Sciatic nerve (tissue), 2 donors: ENCODE measurements at regions of chr2 and their contacts with region 1.

Region 1: GRCh38 chr2:16613539-16614011 is 52.1 kb downstream of the CYRIA start:
- DNase-seq: no peak
- ATAC-seq: peak; percentile 9

Region 2: GRCh38 chr2:16525265-16525887 is 88.2 kb before region 1 on chr2:
- intact Hi-C with region 1: no loop called
- DNase-seq: no peak
- ATAC-seq: no peak

Region 3: GRCh38 chr2:16671760-16672159 is 58.2 kb after region 1 on chr2:
- intact Hi-C with region 1: no loop called
- DNase-seq: no peak
- ATAC-seq: no peak

Region 4: DNA sequence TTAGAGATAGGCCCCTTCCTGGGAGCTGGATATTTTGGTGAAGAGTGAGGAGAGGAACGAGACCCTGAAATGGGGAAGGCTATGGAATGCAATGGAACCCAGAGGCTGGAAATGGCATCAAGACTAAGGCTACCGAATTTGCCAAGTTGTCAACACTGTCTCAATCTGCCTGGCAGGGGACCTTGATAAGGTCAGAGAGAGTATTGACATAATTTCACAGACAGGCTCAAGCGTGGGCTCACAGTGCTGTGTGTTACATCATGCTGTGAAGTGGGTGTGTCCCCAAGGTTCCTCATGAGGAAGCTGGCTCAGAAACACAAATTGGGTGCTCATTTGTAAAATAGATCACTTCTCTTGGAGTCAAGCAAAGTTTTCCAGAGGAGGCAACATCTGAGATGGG is 103.9 kb after region 1 on chr2:
- intact Hi-C with region 1: no loop called
- DNase-seq: no peak
- ATAC-seq: peak; percentile 57

Region 5: DNA sequence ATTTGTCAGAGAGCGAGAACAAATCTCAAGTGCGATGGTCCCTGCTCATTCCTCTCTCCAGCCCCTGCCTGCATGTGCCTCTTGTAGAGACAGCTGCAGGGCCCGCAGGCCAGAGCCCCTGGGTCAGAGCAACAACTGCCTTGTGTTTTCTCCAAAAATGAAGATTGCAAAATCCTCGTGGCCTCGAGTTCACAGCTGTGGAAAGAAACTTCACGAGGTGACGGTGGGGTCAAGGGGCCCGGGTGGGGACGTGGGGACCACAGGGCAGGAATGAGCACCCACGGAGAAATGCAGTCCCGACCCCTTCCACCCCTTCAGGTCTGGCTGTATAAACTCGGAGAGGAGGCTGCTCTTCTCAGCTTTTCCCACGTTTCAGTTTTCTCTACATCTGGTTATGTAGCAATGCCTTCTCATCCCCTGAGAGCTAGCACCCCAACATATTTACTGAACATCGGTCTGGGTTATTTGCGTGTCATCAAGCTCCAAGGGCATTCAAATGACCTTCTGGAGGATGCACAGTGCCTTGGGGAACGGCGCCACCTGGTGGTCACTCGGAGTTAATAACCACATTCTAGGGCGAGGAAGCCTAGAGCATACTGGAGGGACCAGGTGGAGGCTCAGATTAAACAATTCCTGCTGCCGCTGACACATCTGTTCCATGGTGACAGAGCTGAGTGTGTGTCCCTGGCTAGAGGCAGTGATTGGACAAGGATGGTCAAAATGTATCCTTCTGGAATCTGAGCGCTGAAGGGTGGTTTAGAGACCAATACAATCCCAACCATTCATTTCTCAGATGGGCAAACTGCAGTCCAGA is 143.5 kb after region 1 on chr2:
- intact Hi-C with region 1: loop called (anchors 10 kb)
- DNase-seq: peak; percentile 90
- ATAC-seq: peak; percentile 94